HCT116 (cell line): ENCODE measurements at regions of chr3 and their contacts with region 1.

Region 1: DNA sequence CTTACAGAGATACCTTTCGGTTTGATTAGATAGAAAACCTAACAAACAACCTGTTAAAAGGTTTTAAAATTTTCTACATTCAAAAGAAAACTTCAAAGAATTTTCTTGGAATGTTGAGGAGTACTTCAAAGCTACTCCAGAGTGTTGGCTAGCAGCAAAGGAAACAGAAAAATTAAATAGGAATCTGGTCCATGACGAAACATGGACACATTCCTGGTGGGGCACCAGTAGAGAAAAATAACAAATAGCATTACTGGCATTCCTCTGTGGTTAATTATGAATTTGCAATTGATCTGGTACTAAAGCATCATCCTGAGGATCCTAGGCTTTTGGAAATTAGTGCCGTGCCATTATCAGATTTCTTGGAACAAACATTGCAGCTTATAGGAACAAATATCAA is 59.5 kb upstream of the DPPA4 start:
- DNase-seq: no peak
- ATAC-seq: no peak
- H3K4me3 ChIP-seq: no peak overlapping the region
- H3K27ac ChIP-seq: no peak overlapping the region
- H3K4me1 ChIP-seq: no peaks in the 10 kb centered on the region
- H3K27me3 ChIP-seq: no peaks in the 10 kb centered on the region
- CTCF ChIP-seq: no peak
- POLR2A ChIP-seq: no peak
- RAD21 ChIP-seq: no peak

Region 2: DNA sequence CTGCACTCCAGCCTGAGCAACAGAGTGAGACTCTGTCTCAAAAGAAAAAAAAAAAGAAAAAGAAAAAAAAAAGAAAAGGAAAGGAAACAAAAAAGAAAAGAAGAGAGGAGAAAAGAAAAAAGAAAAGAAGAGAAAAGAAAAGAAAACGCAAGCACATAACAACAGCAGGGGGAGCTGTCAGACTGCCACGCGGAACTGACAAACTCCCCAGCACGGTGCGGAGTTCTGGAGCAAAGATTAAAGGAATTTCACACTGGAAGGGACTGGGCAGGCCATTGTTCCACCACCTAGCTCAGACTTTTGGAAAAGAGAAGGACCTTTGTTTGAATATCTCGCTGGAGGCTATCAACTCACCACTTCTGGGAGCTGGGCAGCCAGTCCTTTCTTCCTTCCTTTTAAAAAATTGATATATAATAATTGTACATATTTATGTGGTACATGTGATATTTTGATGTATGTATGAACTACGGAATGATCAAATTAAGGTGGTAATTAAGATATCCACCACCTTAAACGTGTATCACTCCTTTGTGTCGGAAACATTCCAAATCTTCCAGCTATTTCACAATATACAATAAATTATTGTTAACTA is 121.0 kb before region 1 on chr3:
- CTCF ChIA-PET with region 1: interaction called, 9 read pairs
- POLR2A ChIA-PET with region 1: no interaction called
- RAD21 ChIA-PET with region 1: interaction called in 1 of 2 experiments, 3 read pairs
- intact Hi-C with region 1: loop called (anchors 2 kb)
- DNase-seq: peak; percentile 44
- ATAC-seq: peak; percentile 84
- H3K4me3 ChIP-seq: no peak overlapping the region
- H3K27ac ChIP-seq: no peak overlapping the region
- H3K4me1 ChIP-seq: no peaks in the 10 kb centered on the region; a peak in 1 of 4 replicates
- H3K27me3 ChIP-seq: no peaks in the 10 kb centered on the region
- CTCF ChIP-seq: peak; percentile 67 to 73 (median 70); a peak in 5 of 6 replicates
- POLR2A ChIP-seq: no peak
- RAD21 ChIP-seq: peak; percentile 92

Region 3: DNA sequence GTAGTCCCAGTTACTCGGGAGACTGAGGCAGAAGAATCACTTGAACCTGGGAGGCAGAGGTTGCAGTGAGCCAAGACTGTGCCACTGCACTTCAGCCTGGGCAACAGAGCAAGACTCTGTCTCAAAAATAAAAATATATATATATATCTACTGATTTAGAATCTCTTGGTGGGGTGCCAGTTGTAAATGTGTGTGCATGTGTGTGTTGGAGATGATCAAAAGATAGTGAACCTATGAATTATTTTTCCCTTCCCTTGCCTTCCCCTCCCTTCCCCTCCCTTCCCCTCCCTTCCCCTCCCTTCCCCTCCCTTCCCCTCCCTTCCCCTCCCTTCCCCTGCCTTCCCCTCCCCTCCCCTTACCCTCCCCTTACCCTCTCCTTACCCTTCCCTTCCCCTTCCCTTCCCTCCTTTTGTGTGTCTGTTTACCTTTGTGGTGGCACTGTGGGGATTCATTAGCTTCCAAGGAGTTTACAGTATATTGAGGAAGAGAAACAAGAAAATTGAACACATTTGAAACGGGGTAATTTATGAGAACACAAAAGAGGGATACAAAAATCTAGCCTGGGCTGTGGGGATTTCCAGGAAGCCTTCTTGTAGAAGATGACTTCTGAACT is 222.1 kb after region 1 on chr3:
- CTCF ChIA-PET with region 1: no interaction called
- POLR2A ChIA-PET with region 1: no interaction called
- RAD21 ChIA-PET with region 1: no interaction called
- intact Hi-C with region 1: no loop called
- DNase-seq: no peak
- ATAC-seq: no peak
- H3K4me3 ChIP-seq: no peak overlapping the region
- H3K27ac ChIP-seq: no peak overlapping the region
- H3K4me1 ChIP-seq: no peaks in the 10 kb centered on the region
- H3K27me3 ChIP-seq: no peaks in the 10 kb centered on the region
- CTCF ChIP-seq: no peak
- POLR2A ChIP-seq: no peak
- RAD21 ChIP-seq: no peak